ENCODE measurements at regions of chr17 and their contacts with region 1.

Region 1: GRCh38 chr17:63991611-63992010 is 6.5 kb upstream of the PRR29 start:
- DNase-seq: no peak
- ATAC-seq: no peak
- H3K4me3 ChIP-seq: no peak overlapping the region
- H3K27ac ChIP-seq: no peak overlapping the region
- H3K4me1 ChIP-seq: peaks cover 6% of the 10 kb centered on the region; the same call in 1 of the 3 replicates
- CTCF ChIP-seq: no peak
- EP300 ChIP-seq: no peak
- POLR2A ChIP-seq: no peak
- RAD21 ChIP-seq: no peak

Region 2: DNA sequence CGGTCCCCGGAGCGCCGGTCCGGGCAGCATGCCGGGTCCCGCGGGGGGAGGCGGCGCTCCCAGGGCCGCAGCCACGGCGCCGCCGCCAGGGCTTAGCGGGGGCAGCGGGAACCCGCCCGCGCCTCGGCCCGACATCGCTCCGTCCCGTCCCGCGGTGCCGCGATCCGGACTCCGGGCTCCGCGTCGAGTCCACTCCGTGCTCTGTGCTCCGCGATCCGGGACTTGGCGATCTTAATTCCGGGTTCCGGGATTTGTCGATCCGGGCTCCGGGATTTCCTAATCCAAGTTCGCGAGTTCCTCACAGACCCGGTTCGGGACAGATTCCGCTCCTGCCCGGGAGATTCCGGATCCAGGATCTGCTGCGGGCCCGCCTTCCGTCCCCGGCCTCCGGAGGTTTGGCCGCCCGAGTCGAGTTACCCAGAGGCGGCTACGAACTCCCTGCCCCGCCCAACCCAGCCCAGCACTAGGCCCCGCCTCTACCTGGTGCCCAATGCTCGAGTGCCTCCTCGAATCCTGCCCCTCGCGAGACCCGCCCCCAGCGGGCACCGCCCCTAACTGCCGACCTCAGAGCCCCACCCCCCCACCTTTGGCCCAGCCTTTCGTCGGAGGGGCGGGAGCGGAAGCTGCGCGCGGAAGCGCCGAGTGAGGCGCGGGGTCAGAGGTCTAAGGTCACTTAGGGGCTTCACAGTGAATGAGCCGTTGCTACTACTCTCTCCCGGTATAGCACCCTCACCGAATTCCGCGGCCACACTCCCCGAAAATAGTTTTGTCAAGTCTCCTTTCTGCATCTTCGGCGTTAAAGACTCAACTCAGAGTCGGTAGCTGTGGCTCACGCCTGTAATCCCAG is 148.8 kb before region 1 on chr17 and contains the start of gene SMARCD2:
- CTCF ChIA-PET with region 1: no interaction called
- POLR2A ChIA-PET with region 1: interaction called, 11 read pairs
- DNase-seq: peak; percentile 90 to 100
- ATAC-seq: peak; percentile 80 to 90
- H3K4me3 ChIP-seq: peak within 1 kb of the TSS; percentile 89
- H3K27ac ChIP-seq: peak within 1 kb of the TSS; percentile 94 to 97
- H3K4me1 ChIP-seq: peaks cover 32% of the 10 kb centered on the region
- CTCF ChIP-seq: no peak
- EP300 ChIP-seq: peak in 1 of 2 experiments; percentile 18; a peak in 1 of 5 replicates
- POLR2A ChIP-seq: peak; percentile 36; the same call in 1 of the 2 replicates
- RAD21 ChIP-seq: no peak
- polyA plus RNA-seq, gene SMARCD2: 52.7 and 61.9 TPM in 2 replicates

Region 3: DNA sequence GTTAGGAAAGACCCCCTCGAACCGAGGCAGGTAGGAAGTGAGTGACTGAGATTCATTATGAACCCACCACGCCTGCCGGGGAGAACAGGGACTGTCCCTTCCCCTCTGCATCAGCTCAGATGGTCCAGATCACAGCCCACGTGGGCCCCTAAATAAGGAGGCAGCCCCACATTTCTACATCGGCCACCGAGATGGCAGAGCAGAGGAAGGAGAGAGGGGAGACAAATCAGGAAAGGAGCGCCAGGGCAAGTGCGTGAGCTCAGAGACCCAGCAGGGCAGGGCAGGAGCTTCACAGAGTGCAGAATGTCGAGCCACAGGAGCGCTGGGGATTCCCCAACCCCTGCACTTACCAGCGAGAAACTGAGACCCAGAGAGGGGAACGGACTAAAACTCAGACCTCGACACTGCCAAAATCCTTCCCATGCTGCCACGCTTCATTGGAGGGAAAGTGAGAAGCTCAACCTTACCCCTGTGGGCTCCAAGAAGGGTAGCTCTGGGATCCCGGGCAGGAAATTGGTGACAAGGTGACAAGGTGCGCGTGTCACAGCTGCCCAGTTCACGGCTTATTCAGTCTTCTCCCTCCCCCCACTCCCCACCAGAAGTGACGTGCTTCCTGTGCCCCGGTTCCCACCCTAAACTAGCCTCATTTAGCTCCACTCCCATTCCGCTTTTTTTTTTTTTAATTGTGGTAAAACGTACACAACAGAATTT is 28.6 kb after region 1 on chr17 and contains the start of gene ICAM2:
- CTCF ChIA-PET with region 1: interaction called, 21 read pairs
- POLR2A ChIA-PET with region 1: no interaction called
- DNase-seq: no peak
- ATAC-seq: peak in 1 of 2 experiments; percentile 33; a peak in 2 of 6 replicates
- H3K4me3 ChIP-seq: no peak within 1 kb of the TSS
- H3K27ac ChIP-seq: no peak within 1 kb of the TSS
- H3K4me1 ChIP-seq: no peaks in the 10 kb centered on the region
- CTCF ChIP-seq: no peak
- EP300 ChIP-seq: no peak
- POLR2A ChIP-seq: no peak
- RAD21 ChIP-seq: no peak
- polyA plus RNA-seq, gene ICAM2: not detected in 2 replicates

Measured in A549 (cell line).